RWPE1 (cell line): ENCODE measurements at regions of chr5 and their contacts with region 1.

Region 1: DNA sequence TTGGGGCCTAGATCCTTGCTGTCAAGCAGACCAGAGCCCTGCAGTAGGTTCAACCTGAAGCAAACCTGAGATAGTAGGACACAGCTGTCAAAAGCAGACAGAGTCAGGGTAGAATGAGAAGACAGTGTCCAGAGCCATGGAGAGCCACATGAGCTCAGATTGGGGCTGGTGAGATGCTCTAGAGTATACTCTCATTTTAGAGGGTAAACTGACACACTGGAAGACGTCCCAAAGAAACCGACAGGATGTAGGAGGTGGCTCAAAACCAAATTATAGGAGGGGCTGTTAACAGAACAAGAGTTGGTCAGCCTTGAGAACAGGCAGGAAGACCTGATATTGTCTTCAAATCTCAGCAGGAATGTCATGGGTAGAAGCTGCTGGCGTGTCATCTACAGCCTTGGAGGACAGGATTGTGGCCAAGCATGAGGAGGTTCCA is 11.5 kb downstream of the CCDC69 start:
- DNase-seq: no peak
- H3K27ac ChIP-seq: no peak overlapping the region
- CTCF ChIP-seq: no peak

Region 2: DNA sequence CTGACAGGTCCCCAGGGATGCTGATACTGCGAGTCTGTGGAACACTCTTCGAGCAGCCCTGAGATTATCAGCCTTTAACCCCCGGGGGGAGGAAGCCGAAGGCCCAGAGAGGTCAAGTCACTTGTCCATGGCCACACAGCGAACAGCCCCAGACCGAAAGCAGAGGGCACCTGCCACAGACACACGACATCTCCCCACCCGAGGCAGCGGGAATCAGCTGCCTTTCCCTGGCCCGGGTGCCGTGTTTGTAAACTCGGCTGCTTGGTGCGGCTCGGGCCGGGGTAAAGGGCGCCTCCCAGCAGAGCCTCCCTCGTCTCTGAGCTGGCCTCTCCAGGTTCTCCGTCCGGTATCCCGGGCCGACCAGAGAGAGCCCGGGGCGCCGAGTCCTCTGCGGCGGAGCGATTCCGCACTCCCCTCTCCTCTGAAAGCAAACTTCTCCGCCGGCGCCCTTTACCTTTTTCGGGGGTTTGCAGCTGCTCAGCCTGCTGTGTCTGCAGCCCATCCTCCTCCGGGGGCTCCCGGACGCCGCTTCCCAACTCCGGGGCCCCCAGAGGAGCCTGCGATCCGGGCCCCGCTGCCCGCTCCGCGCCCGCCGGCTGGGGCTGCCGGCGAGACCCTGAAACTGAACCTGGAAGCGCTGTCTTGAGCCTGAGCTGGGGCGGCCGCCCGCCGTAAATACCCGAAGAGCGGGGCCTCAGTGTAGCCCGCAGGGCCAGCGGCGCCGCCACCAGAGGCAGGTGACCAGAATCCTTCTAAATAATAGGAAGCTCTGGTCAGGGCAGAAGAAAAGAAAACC is 11.2 kb after region 1 on chr5 and contains the start of gene CCDC69:
- CTCF ChIA-PET with region 1: interaction called, 11 read pairs
- POLR2A ChIA-PET with region 1: no interaction called
- DNase-seq: peak; percentile 80
- H3K27ac ChIP-seq: no peak within 1 kb of the TSS; the same call in 1 of the 2 replicates
- CTCF ChIP-seq: peak; percentile 31; the same call in 1 of the 2 replicates